BJ (cell line): ENCODE measurements at regions of chr2 and their contacts with region 1.

Region 1: DNA sequence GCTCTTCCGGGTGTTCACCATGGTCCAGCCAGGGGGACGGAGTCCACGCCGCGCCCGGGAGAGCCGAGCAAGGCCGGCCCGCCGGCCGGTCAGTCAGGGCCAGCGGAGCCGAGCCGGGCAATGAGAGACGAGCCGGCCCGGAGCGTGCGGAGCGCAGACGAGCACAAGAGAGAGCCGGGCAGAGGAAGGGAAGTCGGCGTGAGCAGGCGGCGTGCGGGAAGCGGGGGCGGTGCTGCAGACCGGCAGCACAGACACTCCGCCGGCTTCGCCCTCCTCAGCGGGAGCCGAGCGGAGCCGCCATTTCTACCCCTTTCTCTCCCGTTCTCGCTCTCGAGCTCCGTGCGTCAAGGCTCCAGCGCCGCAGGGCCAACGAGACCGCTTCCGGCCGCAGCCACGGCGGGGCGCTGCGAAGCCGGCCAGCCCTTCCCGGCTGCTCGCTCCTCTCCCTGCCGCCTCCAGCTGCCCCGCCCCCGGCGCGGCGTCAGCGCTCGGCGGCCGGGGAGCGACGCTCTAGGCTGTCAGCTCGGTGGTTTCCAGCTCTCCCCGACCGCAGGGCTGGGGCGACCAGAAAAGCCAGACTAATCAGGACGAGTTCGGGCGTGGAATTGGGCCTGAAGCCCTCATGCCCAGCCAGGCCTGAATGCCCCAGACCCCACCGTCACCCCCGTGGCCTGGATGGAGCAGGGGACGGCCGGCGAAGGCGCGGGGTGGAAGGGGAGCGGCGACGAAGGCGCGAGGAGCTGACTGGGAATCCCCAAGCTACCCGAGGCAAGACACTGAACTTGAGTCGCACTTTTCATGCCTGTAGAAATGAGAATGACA is at the start of gene ATAD2B:
- DNase-seq: peak; percentile 72
- H3K4me3 ChIP-seq: peak within 1 kb of the TSS; percentile 75
- H3K27me3 ChIP-seq: no peaks in the 10 kb centered on the region
- CTCF ChIP-seq: peak; percentile 75
- polyA plus RNA-seq, gene ATAD2B: 1.5 and 2.9 TPM in 2 replicates

Region 2: GRCh38 chr2:23824777-23825212 is 102.2 kb before region 1 on chr2:
- CTCF ChIA-PET with region 1: interaction called, 29 read pairs
- POLR2A ChIA-PET with region 1: interaction called, 3 read pairs
- DNase-seq: no peak
- H3K4me3 ChIP-seq: no peak overlapping the region
- H3K27me3 ChIP-seq: no peaks in the 10 kb centered on the region
- CTCF ChIP-seq: peak; percentile 63

Region 3: GRCh38 chr2:23939987-23940717 is 13.2 kb after region 1 on chr2 and contains the start of gene UBXN2A:
- CTCF ChIA-PET with region 1: interaction called, 11 read pairs
- POLR2A ChIA-PET with region 1: interaction called, 14 read pairs
- DNase-seq: no peak
- H3K4me3 ChIP-seq: peak within 1 kb of the TSS; percentile 87
- H3K27me3 ChIP-seq: no peaks in the 10 kb centered on the region
- CTCF ChIP-seq: no peak
- polyA plus RNA-seq, gene UBXN2A: 5.8 and 7.9 TPM in 2 replicates

Region 4: DNA sequence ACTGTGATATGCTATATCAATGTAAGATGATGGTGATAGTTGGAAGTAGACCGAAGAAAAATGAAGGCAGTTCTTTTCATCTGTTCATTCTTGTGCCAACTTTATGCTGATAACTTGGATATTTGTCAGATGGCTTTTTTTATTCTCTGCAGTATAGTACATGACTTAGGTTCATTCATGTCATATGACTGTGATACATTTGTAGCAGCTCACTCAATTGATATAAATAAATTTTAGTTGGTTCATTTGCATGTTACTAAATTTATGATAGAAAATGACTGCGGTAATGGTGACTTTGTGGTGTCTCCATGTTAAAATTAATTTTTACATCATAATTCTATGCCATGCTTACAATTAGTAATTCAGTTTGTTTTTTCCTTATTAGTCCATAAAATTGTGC is 20.4 kb after region 1 on chr2:
- CTCF ChIA-PET with region 1: interaction called, 11 read pairs
- POLR2A ChIA-PET with region 1: interaction called, 14 read pairs
- DNase-seq: no peak
- H3K4me3 ChIP-seq: no peak overlapping the region
- H3K27me3 ChIP-seq: no peaks in the 10 kb centered on the region
- CTCF ChIP-seq: no peak

Region 5: DNA sequence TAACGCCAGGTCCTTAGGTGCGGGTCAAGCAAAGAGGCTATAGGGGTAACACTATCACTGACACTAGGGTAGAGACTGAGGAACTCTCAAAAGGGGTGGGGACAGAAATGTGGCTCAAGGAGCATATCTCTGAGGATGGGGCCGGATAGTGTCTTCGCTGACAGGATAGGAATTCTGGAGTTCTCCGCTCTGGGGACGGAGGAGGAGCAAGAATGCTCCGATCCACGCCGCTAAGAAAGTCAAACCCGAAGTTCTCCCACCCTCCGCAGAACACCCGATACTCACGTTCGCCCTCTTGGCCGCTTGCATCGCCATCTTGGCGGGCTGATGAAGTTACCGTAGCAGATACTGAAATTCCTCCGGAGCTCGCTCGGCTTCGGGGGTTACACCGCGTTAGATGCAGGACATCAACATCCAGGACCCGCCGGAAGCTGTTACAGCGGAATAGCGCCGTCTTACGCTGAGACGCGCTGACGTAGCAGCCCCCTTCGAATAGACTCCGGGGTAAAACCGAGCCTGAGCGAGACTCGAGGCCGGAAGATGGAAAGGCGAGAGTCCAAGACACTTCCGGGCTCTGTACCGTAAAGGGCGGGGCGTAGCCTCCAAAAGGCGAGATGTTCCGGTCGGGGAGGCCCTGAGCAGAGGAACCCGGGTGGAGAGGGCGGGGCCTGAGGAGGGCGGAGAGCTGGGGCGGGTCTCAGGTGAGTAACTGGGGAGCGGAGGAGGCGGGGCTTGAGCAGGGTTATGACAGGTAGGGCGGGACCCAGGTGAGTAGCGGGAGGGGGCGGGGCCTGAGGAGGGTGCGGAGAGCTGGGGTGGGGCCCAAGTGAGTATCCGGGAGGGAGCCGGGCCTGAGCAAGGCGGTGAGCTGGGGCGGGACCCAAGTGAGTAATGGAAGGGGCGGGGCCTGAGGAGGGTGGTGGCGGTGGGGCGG is 149.2 kb after region 1 on chr2 and contains the start of gene SF3B6:
- CTCF ChIA-PET with region 1: interaction called, 13 read pairs
- POLR2A ChIA-PET with region 1: no interaction called
- DNase-seq: peak; percentile 95
- H3K4me3 ChIP-seq: peak within 1 kb of the TSS; percentile 94
- H3K27me3 ChIP-seq: no peaks in the 10 kb centered on the region
- CTCF ChIP-seq: no peak
- polyA plus RNA-seq, gene SF3B6: 107 and 199 TPM in 2 replicates

Region 6: GRCh38 chr2:24084386-24085361 is 157.7 kb after region 1 on chr2 and contains the start of gene TP53I3:
- CTCF ChIA-PET with region 1: interaction called, 44 read pairs
- POLR2A ChIA-PET with region 1: interaction called, 7 read pairs
- DNase-seq: peak; percentile 46
- H3K4me3 ChIP-seq: peak within 1 kb of the TSS; percentile 72
- H3K27me3 ChIP-seq: no peaks in the 10 kb centered on the region
- CTCF ChIP-seq: peak; percentile 54
- polyA plus RNA-seq, gene TP53I3: 37.4 and 45.1 TPM in 2 replicates